Breast epithelium (tissue), 4 donors: ENCODE measurements at regions of chr6 and their contacts with region 1.

Region 1: GRCh38 chr6:30489081-30490025 is at the start of gene HLA-E:
- DNase-seq: peak; percentile 92 to 98
- H3K4me3 ChIP-seq: peak within 1 kb of the TSS; percentile 81 to 94 (median 90)
- H3K27ac ChIP-seq: peak within 1 kb of the TSS; percentile 98 to 99
- H3K4me1 ChIP-seq: peaks cover 0 to 11% of the 10 kb centered on the region in 2 donors
- H3K27me3 ChIP-seq: no peaks in the 10 kb centered on the region
- CTCF ChIP-seq: peak in 1 of 3 donors; percentile 4
- POLR2A ChIP-seq: peak; percentile 99
- total RNA-seq, gene HLA-E: 420 to 803 (median 575) TPM

Region 2: GRCh38 chr6:30541515-30542403 is 52.4 kb after region 1 on chr6:
- intact Hi-C with region 1: loop called (anchors 5 kb)
- DNase-seq: peak; percentile 65 to 71
- H3K4me3 ChIP-seq: peak overlapping the region; percentile 15 to 53 (median 35)
- H3K27ac ChIP-seq: no peak overlapping the region
- H3K4me1 ChIP-seq: no peaks in the 10 kb centered on the region
- H3K27me3 ChIP-seq: no peaks in the 10 kb centered on the region
- CTCF ChIP-seq: peak; percentile 86 to 92 (median 90)
- POLR2A ChIP-seq: no peak

Region 3: DNA sequence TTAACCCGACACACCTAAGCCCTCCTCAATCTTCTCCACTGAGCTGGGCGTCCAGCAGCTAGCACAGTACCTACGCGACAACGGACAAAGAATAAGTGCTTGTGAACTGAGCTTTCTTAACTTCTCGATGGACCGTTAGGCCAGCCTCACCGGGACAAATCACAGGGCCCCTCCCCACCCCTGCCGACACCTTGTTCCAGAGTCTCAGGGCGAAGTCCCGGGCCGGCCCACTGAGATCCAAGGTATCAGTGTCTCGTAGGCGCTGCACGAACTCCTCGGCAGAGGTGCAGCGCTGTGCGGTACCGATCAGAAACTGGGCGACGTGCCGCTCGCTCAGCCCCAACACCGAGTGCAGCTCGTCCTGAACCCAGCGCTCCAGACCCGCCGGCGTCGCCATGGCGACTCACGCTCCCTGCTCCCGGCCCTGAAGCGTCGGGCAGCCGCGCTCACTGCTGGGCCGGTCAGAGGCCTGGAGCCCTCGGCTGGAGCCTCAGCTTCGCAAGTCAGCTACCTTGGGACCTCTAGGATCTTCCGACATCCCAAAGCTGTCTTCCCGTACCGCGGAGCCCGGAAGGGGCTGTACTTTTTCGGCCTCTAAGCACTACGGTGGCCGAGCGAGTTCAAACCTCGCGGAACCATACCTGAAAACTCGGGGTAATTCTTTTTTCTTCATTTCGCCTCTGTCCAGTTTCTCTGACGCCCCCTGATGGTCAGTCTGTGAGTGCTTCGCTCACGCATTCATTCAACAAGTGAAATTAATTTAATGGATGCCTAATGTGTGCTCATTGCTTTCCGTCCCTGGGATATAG is 183.3 kb after region 1 on chr6 and contains the start of gene DHX16:
- intact Hi-C with region 1: loop called (anchors 10 kb)
- DNase-seq: peak; percentile 91 to 92
- H3K4me3 ChIP-seq: peak within 1 kb of the TSS; percentile 76 to 95 (median 77)
- H3K27ac ChIP-seq: peak within 1 kb of the TSS; percentile 81 to 84
- H3K4me1 ChIP-seq: peaks cover 0 to 11% of the 10 kb centered on the region in 2 donors
- H3K27me3 ChIP-seq: no peaks in the 10 kb centered on the region
- CTCF ChIP-seq: peak; percentile 78 to 85 (median 81)
- POLR2A ChIP-seq: peak; percentile 16
- total RNA-seq, gene DHX16: 23.5 to 35.3 (median 26.2) TPM